ENCODE measurements at regions of chr19 and their contacts with region 1.

Region 1: GRCh38 chr19:39125554-39126311 is at the start of gene PAK4:
- DNase-seq: peak; percentile 98 to 99
- H3K4me3 ChIP-seq: peak within 1 kb of the TSS; percentile 75 to 93
- H3K27ac ChIP-seq: peak within 1 kb of the TSS; percentile 80 to 84
- H3K4me1 ChIP-seq: peaks cover 0 to 64% (median 42%) of the 10 kb centered on the region in 4 donors
- H3K27me3 ChIP-seq: peaks cover 0 to 6% of the 10 kb centered on the region in 2 donors
- CTCF ChIP-seq: peak in 1 of 2 experiments; percentile 19

Region 2: DNA sequence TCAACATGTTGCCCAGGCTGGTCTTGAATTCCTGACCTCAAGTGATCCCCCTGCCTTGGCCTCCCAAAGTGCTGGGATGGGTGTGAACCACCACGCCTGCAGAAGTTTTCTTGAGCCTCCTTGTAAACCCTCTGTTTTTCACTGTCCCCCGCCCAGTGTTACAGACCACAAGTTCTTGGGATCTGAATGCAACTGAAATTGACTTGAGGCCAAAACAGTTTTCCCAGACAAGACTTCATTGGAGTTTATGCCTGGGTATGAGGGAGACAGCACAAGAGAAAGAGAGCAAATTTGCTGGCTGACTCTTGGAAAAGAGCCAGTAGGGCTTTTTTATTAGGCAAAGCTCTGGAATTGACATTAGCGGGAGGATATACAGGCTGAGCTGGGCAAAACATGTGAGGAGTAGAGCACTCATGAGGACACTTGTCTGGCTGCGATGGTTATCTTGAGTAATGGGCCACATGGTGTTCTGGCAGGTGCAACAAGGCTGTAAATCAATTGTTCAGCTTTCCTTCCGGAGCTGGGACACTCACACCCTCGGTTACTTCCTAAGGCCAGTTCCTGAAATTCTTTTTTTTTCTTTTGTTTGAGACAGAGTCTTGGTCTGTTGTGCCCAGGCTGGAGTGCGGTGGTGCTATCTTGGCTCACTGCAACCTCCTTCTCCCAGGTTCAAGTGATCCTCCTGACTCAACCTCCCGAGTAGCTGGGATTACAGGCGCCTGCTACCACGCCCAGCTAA is 263.2 kb before region 1 on chr19:
- intact Hi-C with region 1: no loop called
- DNase-seq: peak in 1 of 2 donors; percentile 48
- H3K4me3 ChIP-seq: no peak overlapping the region
- H3K27ac ChIP-seq: no peak overlapping the region
- H3K4me1 ChIP-seq: peaks cover 0 to 12% (median 0%) of the 10 kb centered on the region in 4 donors
- H3K27me3 ChIP-seq: peaks cover 0 to 3% of the 10 kb centered on the region in 2 donors
- CTCF ChIP-seq: no peak

Region 3: GRCh38 chr19:38964738-38965137 is 161.0 kb before region 1 on chr19:
- intact Hi-C with region 1: loop called (anchors 10 kb)
- DNase-seq: no peak
- H3K4me3 ChIP-seq: no peak overlapping the region
- H3K27ac ChIP-seq: no peak overlapping the region
- H3K4me1 ChIP-seq: peaks cover 0 to 8% (median 1%) of the 10 kb centered on the region in 4 donors
- H3K27me3 ChIP-seq: no peaks in the 10 kb centered on the region
- CTCF ChIP-seq: no peak

Region 4: DNA sequence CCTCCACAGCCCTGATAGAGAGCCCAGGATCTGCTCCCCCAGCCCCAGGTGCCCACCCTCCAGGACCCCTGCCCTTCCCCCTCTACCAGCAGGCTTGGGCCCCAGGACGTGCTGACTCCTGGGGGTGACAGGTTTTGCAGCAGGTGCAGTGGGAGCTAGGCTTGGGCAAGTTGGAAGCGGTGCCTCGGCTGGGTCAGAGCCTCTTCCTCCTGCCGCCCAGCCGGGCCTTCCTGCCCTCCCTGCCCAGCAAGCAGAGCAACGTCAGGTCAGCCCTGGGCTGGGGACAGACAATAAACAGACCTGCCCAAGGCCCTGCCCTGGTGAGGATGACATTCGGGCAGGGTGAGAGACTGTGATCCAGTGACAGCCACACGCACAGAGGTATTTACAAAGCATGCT is 61.8 kb after region 1 on chr19:
- intact Hi-C with region 1: loop called (anchors 5 kb)
- DNase-seq: no peak
- H3K4me3 ChIP-seq: no peak overlapping the region
- H3K27ac ChIP-seq: no peak overlapping the region
- H3K4me1 ChIP-seq: no peaks in the 10 kb centered on the region
- H3K27me3 ChIP-seq: peaks cover 0 to 26% of the 10 kb centered on the region in 2 donors
- CTCF ChIP-seq: no peak

Region 5: DNA sequence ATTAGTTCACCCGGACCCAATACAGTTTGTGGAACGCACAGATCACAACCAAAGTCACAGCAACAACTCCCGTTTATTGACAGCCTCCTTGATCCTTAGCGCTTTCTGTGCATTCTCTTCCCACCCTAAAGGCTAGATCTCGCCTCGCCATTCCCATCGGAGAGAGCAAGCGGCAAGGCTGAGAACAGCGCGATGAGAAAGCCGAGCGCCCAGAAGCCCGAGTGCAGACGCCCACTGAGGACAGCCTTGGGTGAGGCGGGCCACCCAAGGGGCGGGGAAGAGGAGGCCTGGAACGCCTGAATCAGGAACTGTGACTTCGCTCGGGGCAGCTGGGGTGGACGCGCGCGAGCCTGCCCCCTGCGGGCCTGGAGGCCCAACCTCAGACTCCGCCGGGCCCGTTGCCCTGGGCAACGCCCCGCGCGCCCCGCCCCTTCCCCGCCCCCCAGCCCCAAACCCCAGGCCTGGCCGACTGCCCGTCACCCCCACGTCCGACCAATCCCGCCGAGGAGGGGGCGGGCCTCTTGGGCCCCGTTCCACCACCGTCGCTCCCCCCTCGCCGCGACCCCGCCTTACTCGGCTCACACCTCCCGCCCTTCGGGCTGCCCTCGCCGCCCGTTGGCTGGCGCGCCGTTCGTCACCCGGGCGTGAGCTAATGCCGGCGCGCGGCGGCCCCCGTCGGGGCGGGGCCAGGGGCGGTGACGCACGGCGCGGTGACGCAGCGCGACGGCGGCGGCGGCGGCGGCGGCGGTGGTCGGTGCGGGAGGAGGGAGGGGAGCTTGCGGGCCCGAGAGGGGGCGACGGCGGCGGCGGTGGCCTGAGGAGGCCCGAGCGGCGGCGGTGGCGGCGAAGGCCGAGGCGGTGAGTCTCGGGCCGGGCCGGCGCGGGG is 216.2 kb after region 1 on chr19 and contains the start of gene SAMD4B:
- intact Hi-C with region 1: loop called (anchors 5 kb)
- DNase-seq: peak; percentile 97 to 99
- H3K4me3 ChIP-seq: peak within 1 kb of the TSS; percentile 81 to 96
- H3K27ac ChIP-seq: peak within 1 kb of the TSS; percentile 85 to 91
- H3K4me1 ChIP-seq: peaks cover 0 to 50% (median 43%) of the 10 kb centered on the region in 4 donors
- H3K27me3 ChIP-seq: no peaks in the 10 kb centered on the region
- CTCF ChIP-seq: peak; percentile 79 to 91